T-cell (primary cell): ENCODE measurements at regions of chr7 and their contacts with region 1.

Region 1: GRCh38 chr7:105003275-105003674 is 10.7 kb upstream of the KMT2E start:
- DNase-seq: peak in 2 of 35 experiments; percentile 40 to 54
- ATAC-seq: peak; percentile 54 to 83 (median 74)
- H3K4me3 ChIP-seq: no peak overlapping the region
- H3K4me3 Mint-ChIP-seq: peak overlapping the region; percentile 62 to 69 (median 68)
- H3K27ac ChIP-seq: peak overlapping the region; percentile 13
- H3K27ac Mint-ChIP-seq: peak overlapping the region; percentile 81 to 83
- H3K4me1 ChIP-seq: peaks cover 55 to 59% of the 10 kb centered on the region in 2 experiments
- H3K4me1 Mint-ChIP-seq: peaks cover 90 to 94% (median 93%) of the 10 kb centered on the region in 3 donors
- H3K27me3 ChIP-seq: no peaks in the 10 kb centered on the region
- H3K27me3 Mint-ChIP-seq: no peaks in the 10 kb centered on the region

Region 2: DNA sequence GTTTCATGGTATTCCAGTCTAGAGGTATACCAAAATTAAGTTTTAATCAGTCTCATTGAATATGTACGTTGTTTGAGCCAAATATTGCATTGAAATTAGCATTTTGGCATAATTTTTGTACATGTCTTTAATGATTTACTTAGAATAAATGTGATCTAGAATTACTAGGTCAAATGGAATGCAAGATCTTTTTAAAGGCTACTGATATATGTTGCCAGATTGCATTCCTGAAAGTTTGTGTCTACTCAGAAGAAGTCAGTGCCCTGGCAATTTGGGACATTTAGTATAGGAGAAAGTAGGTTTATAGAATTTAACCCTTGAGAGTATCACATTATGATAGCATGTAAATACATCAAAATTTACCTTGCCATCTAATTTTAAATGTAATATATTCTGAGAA is 43.1 kb after region 1 on chr7:
- CTCF ChIA-PET with region 1: no interaction called
- POLR2A ChIA-PET with region 1: interaction called in 1 of 2 experiments, 11 read pairs
- DNase-seq: no peak
- ATAC-seq: no peak
- H3K4me3 ChIP-seq: no peak overlapping the region
- H3K4me3 Mint-ChIP-seq: no peak overlapping the region
- H3K27ac ChIP-seq: no peak overlapping the region
- H3K27ac Mint-ChIP-seq: peak overlapping the region; percentile 0 to 42
- H3K4me1 ChIP-seq: peaks cover 7 to 18% of the 10 kb centered on the region in 2 experiments
- H3K4me1 Mint-ChIP-seq: peaks cover 55 to 68% (median 59%) of the 10 kb centered on the region in 3 donors
- H3K27me3 ChIP-seq: no peaks in the 10 kb centered on the region
- H3K27me3 Mint-ChIP-seq: no peaks in the 10 kb centered on the region